Heart left ventricle (tissue), 16 donors: ENCODE measurements at regions of chr4 and their contacts with region 1.

Region 1: DNA sequence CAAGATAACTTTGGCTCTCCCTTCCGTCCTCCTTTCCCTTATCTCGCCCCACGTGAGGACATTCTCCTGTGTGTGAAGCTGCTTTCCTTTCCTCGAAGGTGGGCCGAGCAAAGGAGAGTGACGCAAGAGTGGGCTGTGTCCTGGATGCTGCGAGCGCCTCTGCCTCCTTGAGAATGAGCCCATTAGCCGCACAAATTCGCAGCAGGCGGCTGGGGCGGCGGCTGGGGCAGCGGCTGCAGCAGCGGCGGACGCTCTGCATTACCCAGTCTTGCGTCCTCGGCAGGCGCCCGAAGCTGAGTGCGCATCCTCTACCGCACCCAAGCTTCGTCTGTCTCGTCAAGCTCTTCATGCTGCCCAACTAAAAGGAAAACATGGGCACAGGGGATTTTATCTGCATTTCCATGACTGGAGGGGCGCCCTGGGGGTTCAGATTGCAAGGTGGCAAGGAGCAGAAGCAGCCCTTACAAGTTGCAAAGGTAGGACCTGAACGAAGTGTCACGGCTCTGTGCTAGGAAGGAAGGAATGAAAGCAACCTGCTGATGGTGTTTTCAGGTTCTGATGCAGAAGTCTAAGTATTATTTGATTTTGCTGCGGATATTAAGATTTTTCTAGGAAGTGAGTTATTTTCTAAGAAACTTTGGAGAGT is at the start of gene SYNPO2:
- DNase-seq: peak; percentile 82 to 90 (median 88)
- ATAC-seq: peak; percentile 81 to 94 (median 86)
- H3K4me3 ChIP-seq: peak within 1 kb of the TSS; percentile 21 to 82 (median 72)
- H3K27ac ChIP-seq: peak within 1 kb of the TSS; percentile 70 to 93 (median 88)
- H3K4me1 ChIP-seq: peaks cover 0 to 13% (median 7%) of the 10 kb centered on the region in 12 donors
- H3K27me3 ChIP-seq: peaks cover 0 to 14% (median 0%) of the 10 kb centered on the region in 9 donors
- CTCF ChIP-seq: peak in 1 of 12 donors; percentile 5
- POLR2A ChIP-seq: peak in 1 of 2 donors; percentile 82
- total RNA-seq, gene SYNPO2: 151 to 290 (median 247) TPM

Region 2: DNA sequence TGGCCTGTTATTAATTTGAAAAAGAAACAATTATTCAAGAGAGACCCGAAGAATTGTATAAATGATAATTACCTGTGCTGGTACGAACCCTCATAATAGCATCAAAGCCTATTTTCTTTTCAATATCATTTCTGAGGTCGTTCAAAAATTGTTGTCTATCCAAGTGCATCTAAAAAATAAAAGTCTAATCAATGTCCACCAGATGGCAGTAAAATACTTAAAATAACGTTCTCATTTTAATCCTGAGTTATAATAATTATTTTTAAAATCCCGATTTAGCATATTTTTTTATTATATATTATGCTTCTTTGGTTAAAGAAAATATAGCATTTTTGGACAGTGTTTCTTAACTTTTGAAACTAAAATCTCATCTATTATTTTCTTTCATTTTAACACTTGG is 147.9 kb before region 1 on chr4:
- intact Hi-C with region 1: loop called in 9 of 10 experiments (anchors 2 to 10 kb)
- DNase-seq: no peak
- ATAC-seq: no peak
- H3K4me3 ChIP-seq: peak overlapping the region in 7 of 12 donors; percentile 0 to 24 (median 9)
- H3K27ac ChIP-seq: peak overlapping the region; percentile 29 to 83 (median 64)
- H3K4me1 ChIP-seq: peaks cover 0 to 27% (median 14%) of the 10 kb centered on the region in 12 donors
- H3K27me3 ChIP-seq: no peaks in the 10 kb centered on the region
- CTCF ChIP-seq: peak; percentile 38 to 66 (median 50)
- POLR2A ChIP-seq: no peak

Region 3: GRCh38 chr4:118746292-118746919 is 142.4 kb before region 1 on chr4:
- intact Hi-C with region 1: loop called in 9 of 10 experiments (anchors 2 to 10 kb)
- DNase-seq: peak in 4 of 5 donors; percentile 51 to 79 (median 66)
- ATAC-seq: peak; percentile 93 to 96 (median 94)
- H3K4me3 ChIP-seq: no peak overlapping the region
- H3K27ac ChIP-seq: peak overlapping the region; percentile 61 to 86 (median 78)
- H3K4me1 ChIP-seq: peaks cover 0 to 60% (median 31%) of the 10 kb centered on the region in 12 donors
- H3K27me3 ChIP-seq: no peaks in the 10 kb centered on the region
- CTCF ChIP-seq: no peak
- POLR2A ChIP-seq: no peak

Region 4: GRCh38 chr4:118772081-118772766 is 116.6 kb before region 1 on chr4:
- intact Hi-C with region 1: loop called (anchors 1 to 5 kb)
- DNase-seq: no peak
- ATAC-seq: peak; percentile 68 to 81 (median 74)
- H3K4me3 ChIP-seq: peak overlapping the region in 5 of 12 donors; percentile 11 to 38 (median 19)
- H3K27ac ChIP-seq: peak overlapping the region; percentile 1 to 87 (median 64)
- H3K4me1 ChIP-seq: peaks cover 4 to 85% (median 52%) of the 10 kb centered on the region in 12 donors
- H3K27me3 ChIP-seq: no peaks in the 10 kb centered on the region
- CTCF ChIP-seq: peak; percentile 46 to 76 (median 64)
- POLR2A ChIP-seq: no peak

Region 5: DNA sequence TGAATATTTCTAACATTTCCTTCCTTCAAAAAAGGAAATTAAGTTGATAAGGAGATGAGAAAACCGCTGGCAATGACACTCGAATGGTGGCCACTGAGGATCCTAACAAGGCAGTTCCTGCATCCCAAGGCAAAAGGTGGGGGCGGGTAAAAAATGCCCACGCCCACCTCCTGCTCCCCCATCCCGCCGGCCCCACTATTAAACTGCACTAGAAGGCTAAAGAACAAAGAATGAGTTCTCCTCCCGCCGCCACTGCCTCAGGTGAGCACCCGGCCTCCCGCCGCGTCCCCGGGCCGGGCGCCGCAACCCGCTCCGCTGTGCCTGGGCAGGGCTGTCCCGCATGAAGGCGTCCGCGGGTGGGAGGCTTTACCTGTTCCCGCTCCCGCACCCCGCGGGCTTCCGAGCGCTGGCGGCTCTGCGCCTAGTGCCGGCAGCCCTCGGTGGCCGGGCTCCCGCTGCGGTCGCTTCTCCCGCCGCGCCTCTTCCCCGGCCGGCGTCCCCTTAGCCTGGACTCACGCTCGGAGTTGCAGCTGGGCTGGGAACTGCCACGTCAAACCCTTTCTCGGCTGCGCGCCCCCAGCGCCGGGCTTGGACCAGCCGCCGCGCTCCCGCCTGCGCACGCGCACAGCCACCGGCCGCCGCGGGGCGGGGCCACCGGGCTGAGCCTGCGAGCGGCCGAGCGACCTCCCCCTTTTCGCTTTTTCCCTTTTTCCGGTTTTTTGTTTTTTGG is 53.1 kb before region 1 on chr4 and contains the start of gene SEC24D:
- intact Hi-C with region 1: loop called in 4 of 10 experiments (anchors 5 to 10 kb)
- DNase-seq: peak; percentile 89 to 95 (median 93)
- ATAC-seq: peak; percentile 83 to 97 (median 91)
- H3K4me3 ChIP-seq: peak within 1 kb of the TSS; percentile 74 to 100 (median 94)
- H3K27ac ChIP-seq: peak within 1 kb of the TSS; percentile 79 to 98 (median 93)
- H3K4me1 ChIP-seq: peaks cover 0 to 46% (median 24%) of the 10 kb centered on the region in 12 donors
- H3K27me3 ChIP-seq: no peaks in the 10 kb centered on the region
- CTCF ChIP-seq: peak in 4 of 12 donors; percentile 3 to 36 (median 22)
- POLR2A ChIP-seq: peak in 1 of 2 donors; percentile 75
- total RNA-seq, gene SEC24D: 13.3 to 36.4 (median 14.8) TPM

Region 6: GRCh38 chr4:118968005-118968404 is 79.2 kb after region 1 on chr4:
- intact Hi-C with region 1: loop called (anchors 2 to 10 kb)
- DNase-seq: peak in 4 of 5 donors; percentile 48 to 65 (median 58)
- ATAC-seq: peak; percentile 57 to 83 (median 76)
- H3K4me3 ChIP-seq: peak overlapping the region in 3 of 12 donors; percentile 4 to 18 (median 5)
- H3K27ac ChIP-seq: peak overlapping the region; percentile 38 to 86 (median 72)
- H3K4me1 ChIP-seq: peaks cover 2 to 87% (median 51%) of the 10 kb centered on the region in 12 donors
- H3K27me3 ChIP-seq: no peaks in the 10 kb centered on the region
- CTCF ChIP-seq: no peak
- POLR2A ChIP-seq: no peak

Region 7: GRCh38 chr4:118981839-118982381 is 93.1 kb after region 1 on chr4:
- intact Hi-C with region 1: no loop called
- DNase-seq: peak in 4 of 5 donors; percentile 59 to 74 (median 67)
- ATAC-seq: peak; percentile 69 to 81 (median 77)
- H3K4me3 ChIP-seq: peak overlapping the region in 1 of 12 donors; percentile 6
- H3K27ac ChIP-seq: peak overlapping the region in 9 of 12 donors; percentile 18 to 87 (median 59)
- H3K4me1 ChIP-seq: peaks cover 3 to 86% (median 48%) of the 10 kb centered on the region in 12 donors
- H3K27me3 ChIP-seq: no peaks in the 10 kb centered on the region
- CTCF ChIP-seq: peak; percentile 58 to 83 (median 74)
- POLR2A ChIP-seq: no peak

Region 8: DNA sequence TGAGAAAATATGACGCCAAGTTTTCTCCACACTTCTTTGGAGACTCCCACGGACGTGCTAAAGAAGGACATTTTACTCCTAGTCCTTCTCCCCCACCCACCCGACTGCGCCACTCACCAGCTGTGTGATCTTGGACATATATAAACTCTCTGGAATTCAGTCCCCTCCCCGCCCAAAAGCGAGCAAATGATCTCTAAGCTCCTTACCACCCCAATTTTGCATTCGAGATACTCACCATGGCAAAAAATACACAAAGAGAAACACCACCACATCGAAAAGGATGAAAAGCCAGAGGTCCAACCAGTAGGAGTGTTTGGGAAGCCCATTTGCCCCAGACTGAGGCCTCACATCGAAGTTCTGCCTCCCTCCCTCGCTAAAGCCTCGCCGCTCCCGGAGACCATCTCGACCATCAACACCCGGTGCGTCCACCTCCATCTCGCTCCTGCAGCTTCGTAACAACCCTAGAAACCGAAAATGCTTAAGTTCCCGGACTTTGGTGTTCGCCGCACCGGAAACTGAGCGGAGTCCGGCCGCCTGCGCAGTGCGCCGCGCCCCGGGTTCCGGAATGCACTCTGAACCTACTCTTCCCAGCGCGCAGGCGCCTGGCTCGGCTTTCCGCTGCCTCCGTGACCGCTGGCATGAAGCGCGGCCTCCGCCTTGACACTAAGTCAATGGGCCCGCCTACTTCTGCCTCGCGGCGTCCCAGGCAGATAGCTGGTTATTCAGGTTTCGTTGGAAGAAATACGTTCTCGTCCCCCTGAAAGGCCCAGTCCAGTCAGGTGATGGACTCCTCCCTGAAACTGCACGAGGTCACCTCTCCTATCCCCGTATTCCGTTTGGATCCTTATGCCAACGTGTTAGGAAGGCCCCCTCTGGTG is 411.6 kb after region 1 on chr4:
- intact Hi-C with region 1: loop called in 1 of 10 experiments (anchors 10 kb)
- DNase-seq: peak; percentile 94 to 98 (median 96)
- ATAC-seq: peak; percentile 93 to 98 (median 97)
- H3K4me3 ChIP-seq: peak overlapping the region; percentile 63 to 93 (median 78)
- H3K27ac ChIP-seq: peak overlapping the region; percentile 81 to 98 (median 93)
- H3K4me1 ChIP-seq: peaks cover 6 to 41% (median 25%) of the 10 kb centered on the region in 12 donors
- H3K27me3 ChIP-seq: no peaks in the 10 kb centered on the region
- CTCF ChIP-seq: peak in 2 of 12 donors; percentile 8 to 18
- POLR2A ChIP-seq: peak in 1 of 2 donors; percentile 71